Vagina (tissue), 2 donors: ENCODE measurements at regions of chr2 and their contacts with region 1.

Region 1: GRCh38 chr2:180781276-180781675 is 199.1 kb upstream of the UBE2E3 start:
- DNase-seq: no peak
- H3K4me3 ChIP-seq: no peak overlapping the region
- H3K27ac ChIP-seq: no peak overlapping the region
- H3K4me1 ChIP-seq: no peaks in the 10 kb centered on the region
- H3K27me3 ChIP-seq: no peaks in the 10 kb centered on the region
- CTCF ChIP-seq: no peak
- POLR2A ChIP-seq: no peak

Region 2: DNA sequence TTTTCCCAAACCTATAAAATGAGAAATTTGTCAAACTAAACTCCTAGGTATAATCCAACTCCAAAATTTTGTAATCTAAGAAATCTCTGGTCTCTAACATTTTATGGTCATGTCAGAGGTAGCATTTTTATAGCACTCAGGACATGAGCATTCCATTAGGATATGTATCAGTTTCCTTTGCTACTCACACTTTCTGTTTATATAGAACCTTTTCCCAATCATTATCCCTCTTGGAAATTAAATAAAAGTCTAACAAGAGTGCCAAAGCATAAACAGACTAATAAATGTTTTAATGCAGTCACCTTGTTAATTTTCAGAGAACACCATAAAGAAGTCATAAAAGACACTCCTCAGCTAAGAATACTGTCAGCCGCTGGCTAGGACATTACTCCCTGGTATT is 474.2 kb before region 1 on chr2:
- intact Hi-C with region 1: no loop called
- DNase-seq: no peak
- H3K4me3 ChIP-seq: no peak overlapping the region
- H3K27ac ChIP-seq: no peak overlapping the region
- H3K4me1 ChIP-seq: no peaks in the 10 kb centered on the region
- H3K27me3 ChIP-seq: no peaks in the 10 kb centered on the region
- CTCF ChIP-seq: no peak
- POLR2A ChIP-seq: no peak

Region 3: GRCh38 chr2:180463608-180464007 is 317.7 kb before region 1 on chr2:
- intact Hi-C with region 1: no loop called
- DNase-seq: no peak
- H3K4me3 ChIP-seq: no peak overlapping the region
- H3K27ac ChIP-seq: no peak overlapping the region
- H3K4me1 ChIP-seq: no peaks in the 10 kb centered on the region
- H3K27me3 ChIP-seq: no peaks in the 10 kb centered on the region
- CTCF ChIP-seq: no peak
- POLR2A ChIP-seq: no peak

Region 4: DNA sequence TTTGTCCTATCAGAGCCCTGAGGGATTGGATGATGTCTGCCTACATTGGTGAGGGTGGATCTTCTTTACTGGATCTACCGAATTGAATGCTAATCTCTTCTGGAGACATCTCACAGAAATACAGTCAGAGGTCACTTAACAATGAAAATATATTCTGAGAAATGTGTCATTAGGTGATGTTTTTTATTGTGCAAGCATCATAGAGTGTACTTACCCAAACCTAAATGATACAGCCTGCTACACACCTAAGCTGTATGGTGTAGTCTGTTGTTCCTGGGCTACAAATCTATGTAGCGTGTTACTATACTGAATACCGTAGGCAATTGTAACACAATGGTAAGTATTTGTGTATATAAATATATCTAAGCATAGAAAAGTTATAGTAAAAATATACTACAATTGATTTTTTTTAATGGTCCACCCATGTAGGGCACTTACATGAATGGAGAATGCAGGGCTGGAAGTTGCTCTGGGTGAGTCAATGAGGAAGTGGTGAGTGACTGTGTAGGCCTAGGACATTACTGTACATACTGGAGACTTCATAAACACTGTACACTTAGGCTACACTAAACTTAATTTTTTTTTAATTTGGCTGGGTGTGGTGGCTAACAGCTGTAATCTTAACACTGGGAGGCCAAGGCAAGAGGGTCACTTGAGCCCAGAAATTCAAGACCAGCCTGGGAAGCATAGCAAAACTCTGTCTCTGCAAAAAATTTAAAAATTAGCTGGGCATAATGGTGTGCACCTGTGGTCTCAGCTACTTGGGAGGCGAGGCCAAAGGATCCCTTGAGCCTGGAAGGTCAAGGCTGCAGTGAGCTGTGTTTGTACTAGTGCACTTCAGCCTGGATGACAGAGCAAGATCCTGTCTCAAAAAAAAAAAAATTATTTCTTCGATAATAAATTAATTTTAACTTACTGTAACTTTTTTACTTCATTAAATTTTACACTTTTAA is 27.2 kb before region 1 on chr2:
- intact Hi-C with region 1: loop called (anchors 1 kb)
- DNase-seq: no peak
- H3K4me3 ChIP-seq: no peak overlapping the region
- H3K27ac ChIP-seq: no peak overlapping the region
- H3K4me1 ChIP-seq: no peaks in the 10 kb centered on the region
- H3K27me3 ChIP-seq: no peaks in the 10 kb centered on the region
- CTCF ChIP-seq: no peak
- POLR2A ChIP-seq: no peak